Spleen (tissue), 13 donors: ENCODE measurements at regions of chr17 and their contacts with region 1.

Region 1: GRCh38 chr17:78862073-78863023 is 21.7 kb upstream of the USP36 start:
- DNase-seq: no peak
- H3K4me3 ChIP-seq: no peak overlapping the region
- H3K27ac ChIP-seq: peak overlapping the region in 5 of 8 donors; percentile 22 to 75 (median 54)
- H3K4me1 ChIP-seq: peaks cover 4 to 57% (median 29%) of the 10 kb centered on the region in 6 donors
- H3K27me3 ChIP-seq: no peaks in the 10 kb centered on the region
- CTCF ChIP-seq: no peak
- POLR2A ChIP-seq: no peak

Region 2: GRCh38 chr17:78970834-78971773 is 108.8 kb after region 1 on chr17:
- intact Hi-C with region 1: loop called (anchors 5 kb)
- DNase-seq: peak; percentile 92
- H3K4me3 ChIP-seq: peak overlapping the region in 1 of 8 donors; percentile 36
- H3K27ac ChIP-seq: peak overlapping the region in 7 of 8 donors; percentile 46 to 69 (median 55)
- H3K4me1 ChIP-seq: peaks cover 7 to 58% (median 29%) of the 10 kb centered on the region in 6 donors
- H3K27me3 ChIP-seq: no peaks in the 10 kb centered on the region
- CTCF ChIP-seq: peak; percentile 79 to 97 (median 91)
- POLR2A ChIP-seq: no peak

Region 3: DNA sequence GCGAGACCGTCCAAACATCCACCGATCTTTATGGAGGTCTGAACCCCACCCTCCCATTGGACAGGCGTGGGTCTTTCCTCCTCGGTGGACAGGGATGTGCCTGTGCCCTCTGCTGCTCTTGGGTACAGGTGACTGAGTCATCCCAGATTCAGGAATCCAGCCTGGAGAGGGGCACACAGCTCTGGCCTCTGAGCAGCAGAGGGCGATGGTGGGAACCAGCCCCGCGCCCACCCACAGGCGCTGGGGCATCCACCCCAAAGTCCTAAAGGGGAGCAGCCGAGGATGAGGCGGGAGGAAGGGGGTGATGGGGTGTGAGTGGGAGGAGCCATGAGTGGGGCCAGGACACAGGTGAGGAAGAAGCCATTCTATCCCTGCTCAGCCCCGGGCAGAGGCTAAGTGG is 247.2 kb after region 1 on chr17:
- intact Hi-C with region 1: no loop called
- DNase-seq: no peak
- H3K4me3 ChIP-seq: no peak overlapping the region
- H3K27ac ChIP-seq: no peak overlapping the region
- H3K4me1 ChIP-seq: peaks cover 0 to 6% (median 2%) of the 10 kb centered on the region in 6 donors
- H3K27me3 ChIP-seq: peaks cover 0 to 80% (median 5%) of the 10 kb centered on the region in 7 donors
- CTCF ChIP-seq: no peak
- POLR2A ChIP-seq: no peak